GM12878 (cell line): ENCODE measurements at regions of chrX and their contacts with region 1.

Region 1: DNA sequence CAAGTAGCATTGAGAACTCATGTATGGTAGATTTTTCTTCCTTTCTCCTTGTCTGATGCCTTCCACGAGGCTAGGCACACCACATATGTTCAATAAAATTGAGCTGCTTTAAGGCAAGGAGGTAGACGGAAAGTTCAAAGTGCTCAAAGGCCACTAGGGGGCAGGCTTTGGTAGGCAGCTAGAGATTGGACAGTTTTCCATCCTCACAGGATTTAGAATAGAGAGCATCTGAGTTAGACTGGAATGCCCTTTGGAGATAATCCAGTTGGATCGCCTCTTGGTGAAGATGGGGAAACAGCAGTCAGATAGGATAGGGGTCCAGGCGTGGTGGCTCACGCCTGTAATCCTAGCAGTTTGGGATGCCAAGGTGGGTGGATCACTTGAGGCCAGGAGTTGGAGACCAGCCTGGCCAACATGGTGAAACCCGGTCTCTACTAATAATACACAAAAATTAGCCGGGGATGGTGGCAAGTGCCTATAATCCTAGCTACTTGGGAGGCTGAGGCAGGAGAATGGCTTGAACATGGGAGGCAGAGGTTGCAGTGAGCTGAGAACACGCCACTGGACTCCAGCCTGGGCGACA is 30.4 kb downstream of the ELF4 start:
- DNase-seq: no peak
- ATAC-seq: peak; percentile 14; the same call in 2 of the 3 replicates
- H3K4me3 ChIP-seq: no peak overlapping the region
- H3K27ac ChIP-seq: no peak overlapping the region
- H3K4me1 ChIP-seq: peaks cover 26% of the 10 kb centered on the region
- H3K27me3 ChIP-seq: no peaks in the 10 kb centered on the region; a peak in 1 of 4 replicates
- CTCF ChIP-seq: peak; percentile 76 to 85 (median 77)
- EP300 ChIP-seq: no peak
- POLR2A ChIP-seq: no peak
- RAD21 ChIP-seq: peak; percentile 91

Region 2: GRCh38 chrX:129945146-129945545 is 134.8 kb before region 1 on chrX:
- CTCF ChIA-PET with region 1: no interaction called
- POLR2A ChIA-PET with region 1: no interaction called
- RAD21 ChIA-PET with region 1: no interaction called
- SMC1A ChIA-PET with region 1: no interaction called
- in situ Hi-C with region 1: no loop called
- intact Hi-C with region 1: no loop called
- DNase-seq: no peak
- ATAC-seq: no peak
- H3K4me3 ChIP-seq: no peak overlapping the region
- H3K27ac ChIP-seq: no peak overlapping the region
- H3K4me1 ChIP-seq: no peaks in the 10 kb centered on the region
- H3K27me3 ChIP-seq: no peaks in the 10 kb centered on the region
- CTCF ChIP-seq: no peak
- EP300 ChIP-seq: no peak
- POLR2A ChIP-seq: no peak
- RAD21 ChIP-seq: no peak

Region 3: DNA sequence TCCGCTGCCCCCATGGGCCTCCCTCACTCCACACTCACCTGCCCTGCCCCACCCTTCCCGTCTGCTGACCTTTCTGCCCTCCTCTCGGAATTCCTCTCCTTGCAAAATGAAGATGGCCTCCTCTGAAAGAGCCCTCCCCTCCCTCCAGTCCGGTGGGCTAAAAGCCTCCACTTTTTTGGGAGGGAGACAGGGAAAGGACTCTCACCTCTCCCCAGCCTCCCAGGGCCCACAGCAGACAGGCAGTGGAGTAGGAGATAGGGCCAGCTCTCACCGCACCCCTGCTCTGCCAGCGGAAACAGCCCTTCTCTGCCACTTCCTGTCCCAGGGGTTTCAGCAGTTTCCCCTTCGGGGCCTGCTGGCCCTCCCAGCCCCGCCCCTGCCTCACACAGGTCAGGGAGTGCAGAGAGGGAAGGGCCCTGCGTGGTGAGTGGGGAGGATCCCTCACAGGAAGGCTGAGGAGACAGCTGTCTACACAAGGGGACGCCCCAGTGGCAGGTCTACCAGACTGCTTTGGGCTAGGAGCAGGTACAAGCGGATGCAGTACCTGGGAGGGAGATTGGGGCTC is 12.1 kb after region 1 on chrX:
- CTCF ChIA-PET with region 1: interaction called, 15 read pairs
- POLR2A ChIA-PET with region 1: no interaction called
- RAD21 ChIA-PET with region 1: interaction called, 6 read pairs
- SMC1A ChIA-PET with region 1: interaction called, 15 read pairs
- in situ Hi-C with region 1: no loop called
- intact Hi-C with region 1: no loop called
- DNase-seq: peak; percentile 81
- ATAC-seq: peak; percentile 97
- H3K4me3 ChIP-seq: peak overlapping the region; percentile 64; the same call in 1 of the 2 replicates
- H3K27ac ChIP-seq: peak overlapping the region; percentile 88
- H3K4me1 ChIP-seq: peaks cover 18% of the 10 kb centered on the region
- H3K27me3 ChIP-seq: no peaks in the 10 kb centered on the region
- CTCF ChIP-seq: peak; percentile 22 to 33 (median 28); a peak in 4 of 6 replicates
- EP300 ChIP-seq: no peak
- POLR2A ChIP-seq: peak; percentile 76
- RAD21 ChIP-seq: peak; percentile 36; the same call in 1 of the 2 replicates

Region 4: DNA sequence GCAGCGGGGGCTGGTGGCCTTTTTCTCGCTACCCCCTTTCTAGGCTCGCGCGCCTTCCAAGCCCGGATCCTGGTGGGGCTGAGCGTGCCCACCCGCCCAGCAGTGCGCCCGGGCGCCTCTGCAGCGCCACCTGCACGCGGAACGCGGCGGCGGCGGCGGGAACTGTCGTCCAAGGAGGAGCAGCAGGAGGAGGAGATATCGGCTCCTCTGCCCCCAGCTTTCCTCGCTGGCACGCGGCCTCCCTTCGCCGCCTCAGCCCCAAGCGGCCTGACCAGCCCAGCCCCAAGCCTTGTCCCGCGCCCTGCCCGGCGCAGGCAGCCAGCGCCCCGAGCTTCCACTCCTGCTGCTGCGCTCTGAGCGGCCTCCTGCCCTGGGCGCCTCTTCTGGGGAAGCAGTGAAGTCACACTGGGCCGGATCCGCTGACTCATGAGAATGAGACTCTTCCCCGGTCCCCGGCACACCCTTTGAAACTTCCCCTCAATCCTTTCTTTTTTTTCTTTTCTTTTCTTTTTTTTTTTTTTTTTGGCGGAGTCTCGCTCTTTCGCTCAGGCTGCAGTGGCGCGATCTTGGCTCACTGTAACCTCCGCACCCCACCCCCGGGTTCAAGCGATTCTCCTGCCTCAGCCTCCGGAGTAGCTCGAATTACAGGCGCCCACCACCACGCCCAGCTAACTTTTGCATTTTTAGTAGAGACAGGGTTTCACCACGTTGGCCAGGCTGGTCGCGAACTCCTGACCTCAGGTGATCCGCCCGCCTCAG is 41.0 kb after region 1 on chrX:
- CTCF ChIA-PET with region 1: interaction called, 75 read pairs
- POLR2A ChIA-PET with region 1: interaction called, 23 read pairs
- RAD21 ChIA-PET with region 1: interaction called, 75 read pairs
- SMC1A ChIA-PET with region 1: interaction called, 68 read pairs
- in situ Hi-C with region 1: no loop called
- intact Hi-C with region 1: loop called (anchors 1 kb)
- DNase-seq: no peak
- ATAC-seq: peak; percentile 89
- H3K4me3 ChIP-seq: peak overlapping the region; percentile 53; the same call in 1 of the 2 replicates
- H3K27ac ChIP-seq: peak overlapping the region; percentile 65
- H3K4me1 ChIP-seq: peaks cover 30% of the 10 kb centered on the region
- H3K27me3 ChIP-seq: no peaks in the 10 kb centered on the region
- CTCF ChIP-seq: peak; percentile 48 to 56 (median 53); a peak in 4 of 6 replicates
- EP300 ChIP-seq: no peak
- POLR2A ChIP-seq: peak; percentile 45; the same call in 1 of the 2 replicates
- RAD21 ChIP-seq: peak; percentile 64

Region 5: DNA sequence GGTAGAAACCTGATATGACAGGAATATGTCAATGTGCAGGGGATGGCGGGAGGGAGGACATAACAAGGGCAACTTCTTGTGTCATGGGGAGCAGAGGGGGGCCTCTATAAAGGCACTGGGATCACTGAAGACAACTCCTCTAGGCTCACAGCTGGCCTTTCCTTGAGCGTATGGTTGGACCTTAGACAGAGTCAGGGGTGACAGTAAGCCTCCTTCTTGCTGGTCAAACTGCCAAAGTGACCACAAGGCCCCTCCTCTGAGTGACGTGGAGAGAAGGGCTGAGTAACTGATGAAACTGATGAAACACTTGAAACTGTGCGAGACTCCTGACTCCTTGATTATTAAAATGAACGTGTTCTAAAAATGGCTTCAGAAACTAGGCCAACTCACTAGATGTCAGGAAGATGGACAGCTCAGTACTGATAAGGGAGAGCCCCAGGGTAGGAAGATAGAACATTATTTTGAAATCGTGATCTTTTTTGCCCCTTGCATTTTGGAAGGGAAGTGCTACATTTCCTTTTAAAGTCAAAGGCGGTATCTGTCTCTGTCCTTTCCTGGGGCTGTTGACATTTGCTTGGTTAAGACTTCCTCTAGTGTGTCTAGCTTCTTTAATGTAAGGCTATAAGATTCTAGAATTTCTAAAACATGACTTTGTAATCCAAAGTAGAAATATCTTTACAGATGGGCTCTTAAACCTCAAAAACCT is 93.4 kb after region 1 on chrX:
- CTCF ChIA-PET with region 1: interaction called, 30 read pairs
- POLR2A ChIA-PET with region 1: interaction called, 28 read pairs
- RAD21 ChIA-PET with region 1: interaction called, 13 read pairs
- SMC1A ChIA-PET with region 1: interaction called, 18 read pairs
- in situ Hi-C with region 1: loop called (anchors 10 kb)
- intact Hi-C with region 1: loop called (anchors 5 kb)
- DNase-seq: peak; percentile 56
- ATAC-seq: peak; percentile 54
- H3K4me3 ChIP-seq: peak overlapping the region; percentile 80
- H3K27ac ChIP-seq: peak overlapping the region; percentile 84
- H3K4me1 ChIP-seq: peaks cover 17% of the 10 kb centered on the region
- H3K27me3 ChIP-seq: no peaks in the 10 kb centered on the region
- CTCF ChIP-seq: no peak
- EP300 ChIP-seq: no peak
- POLR2A ChIP-seq: peak; percentile 71
- RAD21 ChIP-seq: no peak

Region 6: DNA sequence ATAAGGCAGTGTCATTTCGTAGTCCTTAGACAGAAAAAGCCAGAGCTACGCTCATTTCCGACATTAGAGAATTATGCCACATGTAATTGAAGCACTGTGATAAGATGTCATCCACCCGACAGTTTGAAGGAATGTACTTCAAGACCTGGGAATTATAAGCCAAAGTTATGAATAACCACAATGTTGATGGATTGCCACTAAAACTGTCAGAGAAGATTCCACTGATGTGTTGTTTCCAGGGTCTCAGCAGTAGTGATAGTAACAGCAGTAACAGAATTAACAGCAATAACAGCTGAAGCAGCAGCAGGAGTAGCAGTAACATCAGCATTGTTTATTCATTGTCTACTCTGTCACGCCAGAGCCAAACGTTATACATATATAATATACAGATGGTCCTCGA is 116.6 kb after region 1 on chrX:
- CTCF ChIA-PET with region 1: interaction called, 132 read pairs
- POLR2A ChIA-PET with region 1: no interaction called
- RAD21 ChIA-PET with region 1: interaction called, 53 read pairs
- SMC1A ChIA-PET with region 1: interaction called, 69 read pairs
- in situ Hi-C with region 1: no loop called
- intact Hi-C with region 1: loop called (anchors 1 kb)
- DNase-seq: no peak
- ATAC-seq: no peak
- H3K4me3 ChIP-seq: no peak overlapping the region
- H3K27ac ChIP-seq: no peak overlapping the region
- H3K4me1 ChIP-seq: peaks cover 4% of the 10 kb centered on the region; the same call in 1 of the 2 replicates
- H3K27me3 ChIP-seq: no peaks in the 10 kb centered on the region
- CTCF ChIP-seq: no peak
- EP300 ChIP-seq: no peak
- POLR2A ChIP-seq: no peak
- RAD21 ChIP-seq: no peak